Heart right ventricle (tissue), 16 donors: ENCODE measurements at regions of chr3 and their contacts with region 1.

Region 1: GRCh38 chr3:192917404-192918274 is at the start of gene MB21D2:
- DNase-seq: peak; percentile 79 to 86
- ATAC-seq: peak; percentile 89 to 95 (median 90)
- H3K4me3 ChIP-seq: peak within 1 kb of the TSS; percentile 63 to 97 (median 76)
- H3K27ac ChIP-seq: peak within 1 kb of the TSS; percentile 73 to 97 (median 94)
- H3K4me1 ChIP-seq: peaks cover 4 to 48% (median 31%) of the 10 kb centered on the region in 9 donors
- H3K27me3 ChIP-seq: peaks cover 0 to 42% (median 0%) of the 10 kb centered on the region in 7 donors
- CTCF ChIP-seq: peak in 2 of 9 donors; percentile 28 to 40
- total RNA-seq, gene MB21D2: 1.6 to 4.4 (median 3.5) TPM

Region 2: GRCh38 chr3:192816351-192816750 is 101.3 kb before region 1 on chr3:
- intact Hi-C with region 1: loop called in 9 of 10 experiments (anchors 5 to 10 kb)
- DNase-seq: no peak
- ATAC-seq: peak in 2 of 8 donors; percentile 28 to 35
- H3K4me3 ChIP-seq: no peak overlapping the region
- H3K27ac ChIP-seq: no peak overlapping the region
- H3K4me1 ChIP-seq: peaks cover 0 to 26% (median 20%) of the 10 kb centered on the region in 9 donors
- H3K27me3 ChIP-seq: no peaks in the 10 kb centered on the region
- CTCF ChIP-seq: peak; percentile 58 to 81 (median 72)

Region 3: DNA sequence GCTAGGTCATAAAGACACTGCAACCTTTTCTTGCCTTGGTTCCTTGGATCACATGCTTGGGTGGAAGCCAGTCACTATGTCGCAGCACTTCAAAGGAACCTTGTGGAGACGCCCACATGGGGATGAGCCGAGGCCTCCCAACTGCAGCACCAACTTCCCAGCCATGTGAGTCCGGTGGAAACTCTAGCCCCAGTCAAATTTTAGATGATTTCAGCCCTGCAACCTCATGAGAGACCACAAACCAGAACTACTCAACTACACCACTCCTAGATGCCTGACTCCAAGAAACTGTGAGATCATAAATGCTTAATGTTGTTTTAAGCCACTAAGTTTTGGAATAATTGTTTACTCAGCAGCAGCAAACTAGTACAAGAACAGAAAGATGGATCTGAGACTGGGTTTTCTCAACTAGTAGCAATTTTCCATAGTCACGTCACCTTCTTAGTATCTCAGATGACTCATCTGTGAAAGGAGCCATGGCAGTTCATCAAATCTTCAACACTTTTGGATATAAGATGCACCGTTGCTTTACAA is 86.5 kb before region 1 on chr3:
- intact Hi-C with region 1: loop called in 1 of 10 experiments (anchors 5 kb)
- DNase-seq: no peak
- ATAC-seq: peak in 3 of 8 donors; percentile 6 to 31 (median 10)
- H3K4me3 ChIP-seq: no peak overlapping the region
- H3K27ac ChIP-seq: peak overlapping the region in 4 of 10 donors; percentile 3 to 51 (median 6)
- H3K4me1 ChIP-seq: peaks cover 0 to 69% (median 50%) of the 10 kb centered on the region in 9 donors
- H3K27me3 ChIP-seq: no peaks in the 10 kb centered on the region
- CTCF ChIP-seq: no peak

Region 4: GRCh38 chr3:192864941-192865340 is 52.7 kb before region 1 on chr3:
- intact Hi-C with region 1: loop called in 3 of 10 experiments (anchors 5 to 10 kb)
- DNase-seq: peak in 1 of 2 donors; percentile 38
- ATAC-seq: peak in 7 of 8 donors; percentile 67 to 83 (median 76)
- H3K4me3 ChIP-seq: no peak overlapping the region
- H3K27ac ChIP-seq: peak overlapping the region in 2 of 10 donors; percentile 1 to 20
- H3K4me1 ChIP-seq: peaks cover 4 to 48% (median 23%) of the 10 kb centered on the region in 9 donors
- H3K27me3 ChIP-seq: no peaks in the 10 kb centered on the region
- CTCF ChIP-seq: no peak

Region 5: GRCh38 chr3:192880313-192880712 is 37.3 kb before region 1 on chr3:
- intact Hi-C with region 1: no loop called
- DNase-seq: no peak
- ATAC-seq: no peak
- H3K4me3 ChIP-seq: no peak overlapping the region
- H3K27ac ChIP-seq: no peak overlapping the region
- H3K4me1 ChIP-seq: peaks cover 0 to 16% (median 9%) of the 10 kb centered on the region in 9 donors
- H3K27me3 ChIP-seq: no peaks in the 10 kb centered on the region
- CTCF ChIP-seq: no peak

Region 6: GRCh38 chr3:192890347-192891335 is 27.0 kb before region 1 on chr3:
- intact Hi-C with region 1: loop called in 1 of 10 experiments (anchors 2 kb)
- DNase-seq: no peak
- ATAC-seq: no peak
- H3K4me3 ChIP-seq: no peak overlapping the region
- H3K27ac ChIP-seq: peak overlapping the region in 2 of 10 donors; percentile 0 to 33
- H3K4me1 ChIP-seq: peaks cover 0 to 45% (median 27%) of the 10 kb centered on the region in 9 donors
- H3K27me3 ChIP-seq: no peaks in the 10 kb centered on the region
- CTCF ChIP-seq: no peak

Region 7: DNA sequence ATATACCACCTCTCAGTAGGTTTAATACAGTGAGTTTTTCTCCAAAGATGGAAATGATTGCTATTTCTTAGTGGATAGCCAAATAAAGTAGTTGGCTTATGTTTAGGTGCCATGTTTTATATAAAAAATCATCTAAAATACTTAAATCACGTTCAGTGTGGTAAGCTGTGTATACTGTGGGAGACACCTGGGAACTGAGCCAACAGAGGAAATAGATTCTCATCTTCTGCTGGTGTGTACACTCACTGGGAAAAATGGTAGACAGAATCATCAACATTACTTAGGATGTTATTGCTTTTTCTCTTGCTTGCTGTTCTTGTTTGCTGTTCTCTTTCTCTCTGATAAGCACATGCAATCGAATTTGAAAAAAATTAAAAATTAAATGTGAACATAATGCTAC is 112.6 kb after region 1 on chr3:
- intact Hi-C with region 1: loop called in 3 of 10 experiments (anchors 5 to 10 kb)
- DNase-seq: no peak
- ATAC-seq: no peak
- H3K4me3 ChIP-seq: no peak overlapping the region
- H3K27ac ChIP-seq: no peak overlapping the region
- H3K4me1 ChIP-seq: no peaks in the 10 kb centered on the region
- H3K27me3 ChIP-seq: peaks cover 0 to 5% (median 0%) of the 10 kb centered on the region in 7 donors
- CTCF ChIP-seq: no peak

Region 8: GRCh38 chr3:193040836-193041672 is 123.4 kb after region 1 on chr3:
- intact Hi-C with region 1: loop called in 7 of 10 experiments (anchors 5 to 10 kb)
- DNase-seq: peak in 1 of 2 donors; percentile 11
- ATAC-seq: peak in 5 of 8 donors; percentile 23 to 65 (median 48)
- H3K4me3 ChIP-seq: no peak overlapping the region
- H3K27ac ChIP-seq: no peak overlapping the region
- H3K4me1 ChIP-seq: no peaks in the 10 kb centered on the region
- H3K27me3 ChIP-seq: no peaks in the 10 kb centered on the region
- CTCF ChIP-seq: peak; percentile 16 to 76 (median 58)